Motor neuron (in vitro differentiated cells): ENCODE measurements at regions of chr10 and their contacts with region 1.

Region 1: GRCh38 chr10:42866115-42866995 is 83.8 kb downstream of the BMS1 start:
- ATAC-seq: peak; percentile 99 to 100 (median 100)
- H3K4me3 ChIP-seq: peak overlapping the region; percentile 20 to 33 (median 27)
- H3K27ac ChIP-seq: no peak overlapping the region
- H3K4me1 ChIP-seq: no peaks in the 10 kb centered on the region

Region 2: GRCh38 chr10:43078987-43079275 is 212.6 kb after region 1 on chr10:
- in situ Hi-C with region 1: loop called in 1 of 9 experiments (anchors 25 kb)
- ATAC-seq: peak in 2 of 8 experiments; percentile 4 to 13
- H3K4me3 ChIP-seq: no peak overlapping the region
- H3K27ac ChIP-seq: no peak overlapping the region
- H3K4me1 ChIP-seq: peaks cover 0 to 5% of the 10 kb centered on the region in 2 donors

Region 3: GRCh38 chr10:43105102-43105785 is 238.9 kb after region 1 on chr10:
- in situ Hi-C with region 1: loop called in 6 of 9 experiments (anchors 25 kb)
- ATAC-seq: peak; percentile 70 to 94 (median 90)
- H3K4me3 ChIP-seq: peak overlapping the region; percentile 32 to 43 (median 39)
- H3K27ac ChIP-seq: no peak overlapping the region
- H3K4me1 ChIP-seq: peaks cover 0 to 3% of the 10 kb centered on the region in 2 donors